Psoas muscle (tissue), 8 donors: ENCODE measurements at regions of chr21 and their contacts with region 1.

Region 1: DNA sequence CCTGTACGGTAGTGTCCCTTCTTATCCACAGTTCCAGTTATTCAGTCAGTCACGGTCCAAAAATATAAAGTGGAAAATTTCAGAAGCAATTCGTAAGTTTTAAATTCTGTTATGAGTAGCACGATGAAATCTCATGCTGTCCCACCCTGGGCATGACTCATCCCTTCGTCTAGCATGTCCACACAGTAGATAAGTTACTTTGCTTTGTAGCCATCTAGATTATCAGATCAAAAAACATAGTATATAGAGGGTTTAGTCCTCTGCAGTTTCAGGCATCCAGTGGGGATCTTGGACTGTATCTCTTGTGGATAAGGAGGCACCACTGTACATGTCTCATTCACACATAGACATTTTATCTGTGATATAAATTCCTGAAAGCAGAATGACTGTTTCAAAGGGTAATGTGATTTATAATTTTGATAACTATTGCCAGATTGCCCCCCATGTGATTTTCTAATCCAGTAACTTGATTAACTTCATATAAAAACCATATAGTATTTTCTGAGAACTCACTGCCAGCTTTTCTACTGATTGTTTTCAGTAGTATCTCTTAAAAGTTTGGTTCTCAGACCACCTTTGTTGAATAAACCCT is 143.3 kb downstream of the DYRK1A start:
- DNase-seq: no peak
- ATAC-seq: peak; percentile 42 to 62 (median 52)
- H3K4me3 ChIP-seq: no peak overlapping the region
- H3K27ac ChIP-seq: no peak overlapping the region
- H3K4me1 ChIP-seq: peaks cover 5% of the 10 kb centered on the region
- H3K27me3 ChIP-seq: no peaks in the 10 kb centered on the region
- CTCF ChIP-seq: no peak

Region 2: GRCh38 chr21:35882791-35883240 is 1627.1 kb before region 1 on chr21:
- intact Hi-C with region 1: no loop called
- DNase-seq: peak in 1 of 2 donors; percentile 53
- ATAC-seq: no peak
- H3K4me3 ChIP-seq: no peak overlapping the region
- H3K27ac ChIP-seq: no peak overlapping the region
- H3K4me1 ChIP-seq: no peaks in the 10 kb centered on the region
- H3K27me3 ChIP-seq: peaks cover 0 to 4% (median 0%) of the 10 kb centered on the region in 3 donors
- CTCF ChIP-seq: no peak

Region 3: DNA sequence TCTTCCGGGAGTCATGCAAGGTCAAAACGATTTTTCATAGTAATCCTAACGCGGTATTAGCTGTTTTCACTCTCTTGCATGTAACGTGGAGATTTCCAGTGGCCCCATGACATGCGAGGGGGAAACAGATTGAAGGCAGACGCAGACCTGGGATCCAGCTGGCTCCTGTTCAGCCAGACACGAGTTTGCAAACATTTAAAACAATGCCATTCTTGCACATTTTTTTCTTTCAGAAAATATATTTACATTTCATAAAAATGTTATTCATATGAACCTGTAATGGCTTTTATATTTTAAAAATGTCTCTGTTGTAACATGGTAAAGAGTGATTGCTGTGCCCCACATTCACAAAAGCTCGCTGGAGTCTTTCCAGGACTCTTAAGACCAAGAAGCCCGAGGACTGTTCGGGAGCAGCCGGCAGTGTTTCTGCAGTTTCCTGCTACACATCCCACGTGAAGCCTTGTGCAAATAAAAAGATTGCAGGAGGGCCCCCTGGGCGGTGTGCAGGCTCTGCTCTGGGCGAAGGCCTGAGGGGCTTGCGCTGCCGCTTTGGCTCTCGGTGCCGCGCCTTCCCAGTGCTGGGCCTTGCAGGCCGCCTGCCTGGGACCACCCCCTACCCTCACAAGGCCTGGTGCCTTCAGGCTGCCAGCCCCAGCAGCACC is 41.6 kb after region 1 on chr21:
- intact Hi-C with region 1: loop called in 1 of 2 experiments (anchors 5 kb)
- DNase-seq: no peak
- ATAC-seq: peak in 2 of 4 donors; percentile 0
- H3K4me3 ChIP-seq: peak overlapping the region; percentile 20
- H3K27ac ChIP-seq: peak overlapping the region; percentile 89
- H3K4me1 ChIP-seq: peaks cover 57% of the 10 kb centered on the region
- H3K27me3 ChIP-seq: no peaks in the 10 kb centered on the region
- CTCF ChIP-seq: no peak